Heart right ventricle (tissue), 16 donors: ENCODE measurements at regions of chr4 and their contacts with region 1.

Region 1: GRCh38 chr4:97270051-97270450 is 873.2 kb downstream of the STPG2 start:
- DNase-seq: no peak
- ATAC-seq: no peak
- H3K4me3 ChIP-seq: no peak overlapping the region
- H3K27ac ChIP-seq: no peak overlapping the region
- H3K4me1 ChIP-seq: no peaks in the 10 kb centered on the region
- H3K27me3 ChIP-seq: no peaks in the 10 kb centered on the region
- CTCF ChIP-seq: no peak

Region 2: DNA sequence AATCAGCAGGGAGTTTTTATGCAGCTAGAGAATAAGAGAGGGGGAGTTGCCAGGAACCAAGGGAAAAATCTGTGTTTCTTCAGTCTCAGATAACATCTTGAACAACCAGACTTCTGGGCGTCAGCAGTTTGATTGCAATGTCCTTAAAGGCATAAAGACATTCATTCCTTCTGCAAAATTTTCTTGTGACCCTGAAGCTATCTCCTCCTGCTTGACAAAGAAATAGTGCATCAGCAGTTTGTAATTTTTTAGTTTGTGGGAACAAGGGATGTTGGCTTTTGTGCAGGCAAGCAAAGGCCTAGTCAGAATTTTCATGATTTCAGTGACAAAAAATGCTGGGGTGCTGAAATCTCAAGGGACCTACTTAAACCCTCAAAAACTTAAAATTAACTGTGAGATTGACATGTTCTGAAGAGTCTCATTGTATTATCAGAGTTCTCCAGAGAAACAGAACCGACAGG is 1595.5 kb before region 1 on chr4:
- intact Hi-C with region 1: loop called in 1 of 10 experiments (anchors 5 kb)
- DNase-seq: no peak
- ATAC-seq: peak in 1 of 8 donors; percentile 20
- H3K4me3 ChIP-seq: no peak overlapping the region
- H3K27ac ChIP-seq: no peak overlapping the region
- H3K4me1 ChIP-seq: no peaks in the 10 kb centered on the region
- H3K27me3 ChIP-seq: no peaks in the 10 kb centered on the region
- CTCF ChIP-seq: no peak

Region 3: GRCh38 chr4:97123573-97123972 is 146.5 kb before region 1 on chr4:
- intact Hi-C with region 1: no loop called
- DNase-seq: no peak
- ATAC-seq: no peak
- H3K4me3 ChIP-seq: no peak overlapping the region
- H3K27ac ChIP-seq: no peak overlapping the region
- H3K4me1 ChIP-seq: no peaks in the 10 kb centered on the region
- H3K27me3 ChIP-seq: no peaks in the 10 kb centered on the region
- CTCF ChIP-seq: no peak